Stomach (tissue), 19 donors: ENCODE measurements at regions of chr3 and their contacts with region 1.

Region 1: GRCh38 chr3:159260049-159260662 is 458.3 kb downstream of the MFSD1 start:
- DNase-seq: peak in 1 of 2 donors; percentile 85
- H3K4me3 ChIP-seq: no peak overlapping the region
- H3K27ac ChIP-seq: no peak overlapping the region
- H3K4me1 ChIP-seq: no peaks in the 10 kb centered on the region
- H3K27me3 ChIP-seq: no peaks in the 10 kb centered on the region
- CTCF ChIP-seq: peak in 5 of 7 experiments; percentile 32 to 71 (median 65)
- EP300 ChIP-seq: no peak
- POLR2A ChIP-seq: no peak

Region 2: GRCh38 chr3:158845765-158846350 is 414.3 kb before region 1 on chr3:
- intact Hi-C with region 1: loop called (anchors 5 kb)
- DNase-seq: peak in 1 of 2 donors; percentile 65
- H3K4me3 ChIP-seq: no peak overlapping the region
- H3K27ac ChIP-seq: no peak overlapping the region
- H3K4me1 ChIP-seq: peaks cover 0 to 5% (median 0%) of the 10 kb centered on the region in 4 donors
- H3K27me3 ChIP-seq: no peaks in the 10 kb centered on the region
- CTCF ChIP-seq: peak in 5 of 7 experiments; percentile 45 to 64 (median 58)
- EP300 ChIP-seq: no peak
- POLR2A ChIP-seq: no peak

Region 3: DNA sequence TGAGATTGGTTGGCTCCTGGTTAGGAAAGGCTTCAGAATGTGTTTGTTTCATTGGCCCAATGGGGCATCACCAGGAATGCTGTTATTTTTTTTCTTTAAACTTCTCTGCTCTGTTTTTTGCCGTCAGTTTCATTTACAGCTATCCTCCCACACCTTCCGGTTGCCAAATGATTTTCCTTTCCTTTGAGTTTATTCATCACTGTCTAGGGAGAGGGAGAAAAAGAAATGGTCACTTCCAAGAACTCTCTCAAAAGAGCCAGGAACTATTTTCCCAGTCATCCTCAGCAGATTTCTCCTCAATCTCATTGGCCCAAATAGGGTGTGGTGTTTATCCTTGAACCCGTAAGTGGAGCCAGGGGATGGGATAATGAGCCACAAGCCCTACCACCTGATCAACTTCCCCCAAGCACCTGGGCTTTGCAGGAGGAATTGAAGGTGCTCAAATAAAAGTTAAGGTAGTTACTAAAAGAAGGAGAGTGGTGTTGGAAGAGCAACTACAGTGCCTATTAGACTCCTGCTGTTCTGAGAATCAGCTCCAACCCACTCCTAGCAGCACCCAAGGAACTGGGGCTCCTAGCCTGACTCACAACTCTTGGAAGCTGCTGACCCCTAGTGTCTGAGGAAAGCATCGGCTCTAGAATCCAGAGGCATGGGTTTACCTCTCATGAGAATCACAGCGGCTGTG is 544.7 kb after region 1 on chr3:
- intact Hi-C with region 1: loop called (anchors 10 kb)
- DNase-seq: peak; percentile 58 to 92
- H3K4me3 ChIP-seq: no peak overlapping the region
- H3K27ac ChIP-seq: peak overlapping the region in 4 of 5 donors; percentile 5 to 74 (median 48)
- H3K4me1 ChIP-seq: peaks cover 4 to 55% (median 29%) of the 10 kb centered on the region in 4 donors
- H3K27me3 ChIP-seq: no peaks in the 10 kb centered on the region
- CTCF ChIP-seq: peak in 5 of 7 experiments; percentile 76 to 87 (median 82)
- EP300 ChIP-seq: no peak
- POLR2A ChIP-seq: no peak